ENCODE measurements at regions of chr20 and their contacts with region 1.

Region 1: DNA sequence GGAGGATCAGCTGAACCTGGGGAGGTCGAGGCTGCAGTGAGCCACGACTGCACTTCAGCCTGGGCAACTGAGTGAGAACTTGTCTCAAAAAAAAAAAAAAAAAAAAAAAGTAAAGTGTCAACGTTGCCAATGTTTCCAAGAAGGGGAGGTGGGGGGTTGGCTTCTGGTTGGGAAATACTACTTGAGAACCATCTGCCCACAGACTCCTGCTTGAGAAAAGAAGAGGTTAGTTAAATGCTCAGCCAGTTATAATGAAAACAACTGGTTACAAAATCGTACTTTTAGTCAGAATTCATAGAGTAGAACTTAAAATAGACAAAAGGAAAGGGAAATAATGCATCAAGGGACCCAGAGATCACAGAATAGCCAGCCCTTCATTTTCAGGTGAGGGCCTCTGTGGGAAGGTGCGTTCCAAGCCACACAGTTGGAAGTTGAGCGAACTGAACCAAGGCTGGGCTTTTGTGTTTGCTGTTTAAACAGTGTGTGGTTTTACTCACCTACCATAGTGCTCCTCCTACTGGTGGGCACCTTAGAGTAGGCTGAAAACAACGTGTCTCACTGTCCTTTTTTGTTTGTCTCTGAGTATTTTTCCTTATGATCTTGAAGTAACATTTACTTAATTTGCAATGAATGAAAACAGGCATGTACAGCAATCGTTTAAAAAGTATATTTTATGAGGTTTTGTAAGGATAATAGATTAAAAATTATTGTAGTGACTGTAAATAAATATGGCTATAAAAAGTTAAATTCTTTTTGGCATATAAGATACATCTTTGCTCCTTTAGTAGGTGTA is 200.7 kb downstream of the BCAS1 start:
- DNase-seq: no peak
- H3K4me3 ChIP-seq: no peak overlapping the region
- H3K27ac ChIP-seq: no peak overlapping the region
- H3K4me1 ChIP-seq: peaks cover 7 to 28% (median 16%) of the 10 kb centered on the region in 4 experiments; a peak in 6 of 7 replicates
- H3K27me3 ChIP-seq: no peaks in the 10 kb centered on the region
- CTCF ChIP-seq: peak in 2 of 3 experiments; percentile 61 to 95; a peak in 3 of 4 replicates
- EP300 ChIP-seq: no peak
- POLR2A ChIP-seq: no peak
- RAD21 ChIP-seq: peak; percentile 84 to 85

Region 2: DNA sequence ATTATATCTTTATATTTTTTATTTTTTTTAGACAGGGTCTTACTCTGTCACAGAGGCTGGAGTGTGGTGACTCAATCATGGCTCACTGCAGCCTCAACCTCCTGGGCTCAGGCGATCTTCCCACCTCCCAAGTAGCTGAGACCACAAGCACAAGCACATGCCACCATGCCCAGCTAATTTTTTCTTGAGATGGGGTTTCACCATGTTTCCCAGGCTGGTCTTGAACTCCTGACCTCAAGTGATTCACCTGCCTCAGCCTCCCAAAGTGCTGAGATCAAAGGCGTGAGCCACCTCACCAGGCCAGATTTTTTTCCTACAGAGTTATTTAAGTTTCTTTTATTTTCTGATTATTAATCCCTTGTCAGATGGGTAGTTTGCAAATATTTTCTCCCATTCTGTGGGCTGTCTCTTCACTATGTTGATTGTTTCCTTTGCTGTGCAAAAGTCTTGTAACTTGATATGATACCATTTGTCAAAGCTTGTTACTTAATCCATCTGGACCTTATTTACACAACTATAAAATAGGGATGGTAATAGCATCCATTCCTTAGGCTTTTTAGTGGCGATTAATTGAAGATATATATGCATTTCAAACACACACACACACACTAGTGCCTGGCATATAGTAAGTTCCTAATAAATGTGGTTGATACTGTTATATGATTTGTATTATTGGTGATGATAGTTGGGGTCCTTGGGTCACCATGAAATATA is 13.6 kb after region 1 on chr20:
- CTCF ChIA-PET with region 1: interaction called, 14 read pairs
- POLR2A ChIA-PET with region 1: no interaction called
- DNase-seq: no peak
- H3K4me3 ChIP-seq: no peak overlapping the region
- H3K27ac ChIP-seq: no peak overlapping the region
- H3K4me1 ChIP-seq: peaks cover 3 to 16% (median 8%) of the 10 kb centered on the region in 4 experiments; a peak in 5 of 7 replicates
- H3K27me3 ChIP-seq: no peaks in the 10 kb centered on the region
- CTCF ChIP-seq: no peak
- EP300 ChIP-seq: no peak
- POLR2A ChIP-seq: no peak
- RAD21 ChIP-seq: no peak

Region 3: GRCh38 chr20:53899351-53900167 is 29.9 kb after region 1 on chr20:
- CTCF ChIA-PET with region 1: interaction called, 16 read pairs
- POLR2A ChIA-PET with region 1: no interaction called
- DNase-seq: no peak
- H3K4me3 ChIP-seq: no peak overlapping the region
- H3K27ac ChIP-seq: no peak overlapping the region
- H3K4me1 ChIP-seq: peaks cover 8 to 20% (median 18%) of the 10 kb centered on the region in 4 experiments
- H3K27me3 ChIP-seq: no peaks in the 10 kb centered on the region
- CTCF ChIP-seq: no peak
- EP300 ChIP-seq: no peak
- POLR2A ChIP-seq: no peak
- RAD21 ChIP-seq: no peak

Region 4: DNA sequence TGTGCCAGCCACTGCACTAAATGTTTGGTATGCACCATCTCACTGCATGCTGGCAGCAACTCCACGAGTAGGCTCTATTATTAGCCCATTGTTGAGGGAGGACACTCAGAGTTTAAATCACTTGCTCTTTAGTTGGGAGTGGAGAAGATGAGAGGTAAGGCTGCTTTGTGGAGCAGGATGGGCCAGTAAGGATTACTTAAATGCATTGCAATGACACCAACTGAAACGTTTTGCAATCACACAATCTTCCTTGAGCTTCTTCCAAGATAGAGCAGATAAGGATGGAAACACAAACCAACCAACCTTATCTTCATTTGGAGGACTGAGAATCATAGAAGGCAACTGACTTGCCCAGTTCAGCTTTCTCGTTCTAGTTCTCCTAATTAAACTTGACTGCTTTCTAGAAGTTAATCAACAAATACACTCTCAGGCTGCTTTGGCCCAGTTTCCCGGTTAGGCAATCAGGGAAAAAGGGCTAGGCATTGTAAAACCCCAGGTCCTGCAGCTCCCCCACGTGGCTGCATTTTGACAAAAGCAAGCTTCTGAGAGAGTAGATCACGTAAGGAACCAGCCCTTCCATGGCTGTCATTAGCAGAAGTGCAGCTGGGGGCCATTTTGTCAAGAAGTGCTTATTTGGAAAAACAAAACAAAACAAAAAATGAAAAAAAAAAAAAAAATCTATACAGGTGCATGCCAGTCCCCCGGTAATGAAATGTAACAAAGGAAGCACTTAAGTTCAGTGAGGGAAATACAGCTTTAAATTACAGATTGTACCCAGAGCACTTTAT is 70.1 kb after region 1 on chr20:
- CTCF ChIA-PET with region 1: interaction called, 10 read pairs
- POLR2A ChIA-PET with region 1: no interaction called
- DNase-seq: peak; percentile 77 to 92
- H3K4me3 ChIP-seq: peak overlapping the region in 2 of 4 experiments; percentile 13 to 48; a peak in 2 of 8 replicates
- H3K27ac ChIP-seq: peak overlapping the region; percentile 35
- H3K4me1 ChIP-seq: peaks cover 6 to 25% (median 17%) of the 10 kb centered on the region in 4 experiments
- H3K27me3 ChIP-seq: no peaks in the 10 kb centered on the region
- CTCF ChIP-seq: peak; percentile 57 to 89 (median 82)
- EP300 ChIP-seq: no peak
- POLR2A ChIP-seq: no peak
- RAD21 ChIP-seq: peak; percentile 97 to 99

Region 5: GRCh38 chr20:54048481-54048880 is 178.8 kb after region 1 on chr20:
- CTCF ChIA-PET with region 1: no interaction called
- POLR2A ChIA-PET with region 1: no interaction called
- DNase-seq: no peak
- H3K4me3 ChIP-seq: no peak overlapping the region
- H3K27ac ChIP-seq: no peak overlapping the region
- H3K4me1 ChIP-seq: no peaks in the 10 kb centered on the region
- H3K27me3 ChIP-seq: no peaks in the 10 kb centered on the region
- CTCF ChIP-seq: no peak
- EP300 ChIP-seq: no peak
- POLR2A ChIP-seq: no peak
- RAD21 ChIP-seq: no peak